Posterior vena cava (tissue), 2 donors: ENCODE measurements at regions of chr3 and their contacts with region 1.

Region 1: GRCh38 chr3:30948426-30948825 is 54.0 kb upstream of the GADL1 start:
- DNase-seq: no peak

Region 2: GRCh38 chr3:30996467-30997052 is 48.1 kb after region 1 on chr3:
- intact Hi-C with region 1: loop called in 1 of 2 experiments (anchors 1 kb)
- DNase-seq: no peak